ENCODE measurements at regions of chr4 and their contacts with region 1.

Region 1: DNA sequence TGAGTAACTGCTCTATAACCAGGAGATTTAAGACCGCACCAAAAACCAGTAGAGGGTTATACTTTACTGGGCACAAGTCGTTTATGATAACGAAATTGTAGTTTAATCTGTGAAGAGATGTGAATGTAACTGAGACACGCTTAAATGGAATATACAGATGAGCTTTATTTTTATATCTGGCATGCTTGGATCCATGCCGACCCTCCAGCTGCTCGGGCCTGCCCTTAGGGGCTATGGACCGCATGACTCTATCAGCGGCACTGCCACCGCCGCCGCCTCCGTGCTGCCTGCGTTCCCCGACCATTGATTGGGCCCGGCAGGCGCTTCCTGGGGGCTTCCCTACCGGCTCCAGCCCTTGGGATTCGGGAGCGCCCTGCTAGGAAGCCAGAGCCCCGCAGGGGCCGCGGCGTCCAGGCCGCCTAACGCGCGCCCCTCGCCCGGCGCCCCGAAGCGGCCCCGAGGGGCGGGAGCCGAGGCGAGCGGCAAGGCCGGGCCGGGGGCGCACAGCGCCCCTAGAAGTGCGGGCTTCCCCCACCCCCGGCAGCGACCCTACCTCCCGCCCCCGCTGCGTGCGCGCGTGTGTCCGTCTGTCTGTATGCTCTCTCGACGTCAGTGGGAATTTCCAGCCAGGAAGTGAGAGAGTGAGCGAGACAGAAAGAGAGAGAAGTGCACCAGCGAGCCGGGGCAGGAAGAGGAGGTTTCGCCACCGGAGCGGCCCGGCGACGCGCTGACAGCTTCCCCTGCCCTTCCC is at the start of gene NFKB1:
- DNase-seq: peak; percentile 66 to 77
- ATAC-seq: peak; percentile 53 to 74 (median 61)
- H3K4me3 ChIP-seq: peak within 1 kb of the TSS; percentile 65 to 98 (median 89)
- H3K27ac ChIP-seq: peak within 1 kb of the TSS; percentile 93 to 100 (median 98)
- H3K4me1 ChIP-seq: peaks cover 5 to 46% (median 42%) of the 10 kb centered on the region in 9 donors
- H3K27me3 ChIP-seq: no peaks in the 10 kb centered on the region
- CTCF ChIP-seq: peak in 2 of 9 donors; percentile 0 to 5
- total RNA-seq, gene NFKB1: 17.0 to 30.3 (median 20.6) TPM

Region 2: DNA sequence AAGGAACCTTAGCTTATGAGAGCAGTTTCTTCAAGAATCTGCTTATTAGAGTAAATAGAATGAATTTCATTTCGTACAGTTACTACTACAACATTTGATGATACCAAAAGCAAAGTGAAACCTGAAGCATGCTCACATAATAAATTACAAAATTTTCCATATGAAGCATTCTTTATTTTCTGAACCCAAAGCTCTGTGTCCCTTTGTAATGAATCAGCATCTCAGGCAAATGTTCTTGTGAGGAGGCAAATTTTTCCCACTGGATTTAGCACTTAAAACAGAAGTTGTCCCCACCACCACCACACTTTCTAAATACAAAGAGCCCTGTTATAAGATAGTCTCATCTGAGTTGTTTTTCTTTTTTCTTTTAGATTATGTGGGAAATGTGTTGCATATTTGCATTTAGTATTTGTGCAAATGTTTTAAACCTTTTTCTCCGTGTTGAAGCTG is 70.4 kb before region 1 on chr4:
- intact Hi-C with region 1: loop called in 1 of 10 experiments (anchors 5 kb)
- DNase-seq: no peak
- ATAC-seq: peak in 2 of 8 donors; percentile 32 to 34
- H3K4me3 ChIP-seq: peak overlapping the region; percentile 37 to 66 (median 58)
- H3K27ac ChIP-seq: peak overlapping the region in 8 of 10 donors; percentile 34 to 86 (median 62)
- H3K4me1 ChIP-seq: peaks cover 0 to 18% (median 0%) of the 10 kb centered on the region in 9 donors
- H3K27me3 ChIP-seq: no peaks in the 10 kb centered on the region
- CTCF ChIP-seq: no peak

Region 3: DNA sequence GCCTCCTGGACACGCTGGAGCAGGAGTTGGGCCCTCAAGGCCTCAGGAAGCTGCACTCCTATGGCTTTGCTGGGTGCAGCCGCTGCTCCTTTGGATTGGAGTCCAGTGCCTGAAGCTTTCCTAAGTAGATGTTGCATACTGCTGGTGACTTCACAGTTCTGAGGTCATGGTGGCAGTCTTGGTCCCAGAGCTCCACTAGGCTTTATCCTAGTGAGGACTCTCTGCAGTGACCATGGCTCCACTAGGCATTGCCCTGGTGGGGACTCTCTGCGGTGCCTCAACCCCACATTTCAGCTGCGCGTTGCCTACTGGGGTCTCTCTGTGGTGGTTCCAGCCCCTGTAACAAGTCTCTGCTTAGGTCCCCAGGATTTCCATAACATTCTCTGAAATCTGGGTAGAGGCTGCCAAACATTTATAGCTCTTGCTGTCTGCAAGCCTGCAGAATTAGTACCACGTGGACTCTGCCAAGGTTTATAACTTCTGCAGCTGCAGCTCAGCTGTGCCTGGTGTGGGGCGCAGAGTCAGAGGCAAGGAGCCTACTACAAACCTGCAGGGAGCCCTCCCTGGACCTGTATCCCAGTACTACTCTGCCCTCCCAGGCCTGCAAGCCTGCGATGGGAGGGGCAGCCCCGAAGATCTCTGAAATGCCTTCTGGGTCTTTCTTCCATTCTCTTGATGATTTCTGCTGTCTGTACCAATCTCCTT is 45.7 kb before region 1 on chr4:
- intact Hi-C with region 1: no loop called
- DNase-seq: no peak
- ATAC-seq: no peak
- H3K4me3 ChIP-seq: no peak overlapping the region
- H3K27ac ChIP-seq: no peak overlapping the region
- H3K4me1 ChIP-seq: no peaks in the 10 kb centered on the region
- H3K27me3 ChIP-seq: peaks cover 0 to 2% (median 0%) of the 10 kb centered on the region in 7 donors
- CTCF ChIP-seq: no peak

Region 4: GRCh38 chr4:102564399-102565059 is 63.7 kb after region 1 on chr4:
- intact Hi-C with region 1: loop called in 4 of 10 experiments (anchors 5 to 10 kb)
- DNase-seq: no peak
- ATAC-seq: no peak
- H3K4me3 ChIP-seq: no peak overlapping the region
- H3K27ac ChIP-seq: no peak overlapping the region
- H3K4me1 ChIP-seq: peaks cover 0 to 43% (median 24%) of the 10 kb centered on the region in 9 donors
- H3K27me3 ChIP-seq: no peaks in the 10 kb centered on the region
- CTCF ChIP-seq: no peak

Region 5: GRCh38 chr4:102586644-102587021 is 85.8 kb after region 1 on chr4:
- intact Hi-C with region 1: loop called in 1 of 10 experiments (anchors 10 kb)
- DNase-seq: no peak
- ATAC-seq: no peak
- H3K4me3 ChIP-seq: no peak overlapping the region
- H3K27ac ChIP-seq: no peak overlapping the region
- H3K4me1 ChIP-seq: no peaks in the 10 kb centered on the region
- H3K27me3 ChIP-seq: no peaks in the 10 kb centered on the region
- CTCF ChIP-seq: no peak

Region 6: DNA sequence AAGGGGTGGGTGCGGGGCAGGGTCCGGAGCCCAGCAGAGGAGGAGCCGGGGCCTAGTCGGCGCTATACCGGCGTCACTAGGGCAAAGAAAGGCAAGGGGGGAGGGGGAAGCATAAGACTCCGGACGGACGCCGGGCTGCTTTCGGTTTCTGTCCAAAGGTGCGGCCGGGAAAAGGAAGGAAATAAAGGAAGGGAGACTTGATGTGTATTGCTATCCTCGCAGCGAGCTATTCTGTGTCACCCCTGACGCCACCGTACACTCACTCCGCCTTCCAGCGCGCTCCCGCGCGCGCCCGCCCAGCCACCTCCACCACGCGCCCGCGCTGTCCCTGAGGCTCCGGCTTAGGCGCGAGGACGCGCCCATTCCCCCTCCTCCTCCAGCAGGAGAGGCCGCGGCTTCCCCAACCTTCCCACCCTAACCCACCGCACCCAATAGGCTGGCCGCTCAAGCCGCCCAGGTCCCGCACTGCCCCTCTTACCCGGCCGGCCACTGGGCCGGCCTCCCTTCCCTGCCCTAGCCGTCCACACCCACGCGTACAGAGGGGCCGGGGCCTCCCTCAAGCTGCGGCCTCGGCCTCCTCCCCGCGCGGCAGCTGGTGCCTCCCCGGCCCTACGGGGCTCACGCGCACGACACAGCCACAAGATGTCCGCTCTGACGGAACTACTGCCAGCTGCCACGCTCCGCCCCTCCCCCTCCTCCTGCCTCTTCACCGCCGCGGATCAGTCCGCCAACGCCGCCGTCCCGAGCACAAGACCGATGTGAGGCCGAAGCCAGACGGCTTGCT is 326.2 kb after region 1 on chr4 and contains the start of gene UBE2D3:
- intact Hi-C with region 1: loop called in 2 of 10 experiments (anchors 5 kb)
- DNase-seq: peak; percentile 94 to 95
- ATAC-seq: peak; percentile 72 to 87 (median 75)
- H3K4me3 ChIP-seq: peak within 1 kb of the TSS; percentile 71 to 94 (median 88)
- H3K27ac ChIP-seq: peak within 1 kb of the TSS; percentile 97 to 100 (median 100)
- H3K4me1 ChIP-seq: peaks cover 2 to 54% (median 40%) of the 10 kb centered on the region in 9 donors
- H3K27me3 ChIP-seq: no peaks in the 10 kb centered on the region
- CTCF ChIP-seq: peak in 3 of 9 donors; percentile 17 to 38 (median 33)
- total RNA-seq, gene UBE2D3: 210 to 297 (median 250) TPM

Measured in heart right ventricle (tissue), 16 donors.